G401 (cell line): ENCODE measurements at regions of chr4 and their contacts with region 1.

Region 1: GRCh38 chr4:169707958-169708643 is 49.6 kb downstream of the HPF1 start:
- DNase-seq: no peak

Region 2: DNA sequence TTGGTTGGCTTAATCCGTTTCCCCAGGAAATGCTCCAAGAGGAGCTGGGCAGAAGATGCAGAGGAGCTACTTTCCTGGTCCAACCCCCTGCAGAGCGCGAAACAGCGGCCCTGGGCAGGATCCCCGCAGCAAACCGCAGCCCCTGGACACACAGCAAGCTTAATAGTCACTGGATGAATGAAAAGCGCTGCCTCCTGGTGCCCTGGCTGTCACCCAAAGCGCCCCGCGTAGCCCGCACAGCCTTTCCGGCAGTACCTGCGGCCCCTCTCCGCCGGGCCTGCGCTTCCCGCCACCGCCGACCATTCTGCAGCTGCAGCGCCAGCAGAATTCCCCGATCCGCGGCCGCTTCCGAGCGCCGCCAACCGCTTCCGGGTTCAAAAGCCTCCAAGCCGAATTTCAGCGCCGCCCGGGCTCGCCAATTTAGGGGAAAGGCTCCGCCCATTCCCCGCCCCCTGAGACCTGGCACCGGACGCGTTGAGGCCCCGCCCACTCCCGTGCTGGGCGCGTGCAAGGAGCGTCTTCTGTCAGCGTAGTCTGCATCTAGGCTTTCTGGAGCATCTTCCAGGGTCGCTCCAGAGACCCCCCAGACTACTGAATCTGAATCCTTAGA is 49.6 kb after region 1 on chr4 and contains the start of gene HPF1:
- in situ Hi-C with region 1: loop called (anchors 5 kb)
- DNase-seq: peak; percentile 90
- total RNA-seq, gene HPF1: 23.3 and 57.4 TPM in 2 replicates